GM12878 (cell line): ENCODE measurements at regions of chr9 and their contacts with region 1.

Region 1: DNA sequence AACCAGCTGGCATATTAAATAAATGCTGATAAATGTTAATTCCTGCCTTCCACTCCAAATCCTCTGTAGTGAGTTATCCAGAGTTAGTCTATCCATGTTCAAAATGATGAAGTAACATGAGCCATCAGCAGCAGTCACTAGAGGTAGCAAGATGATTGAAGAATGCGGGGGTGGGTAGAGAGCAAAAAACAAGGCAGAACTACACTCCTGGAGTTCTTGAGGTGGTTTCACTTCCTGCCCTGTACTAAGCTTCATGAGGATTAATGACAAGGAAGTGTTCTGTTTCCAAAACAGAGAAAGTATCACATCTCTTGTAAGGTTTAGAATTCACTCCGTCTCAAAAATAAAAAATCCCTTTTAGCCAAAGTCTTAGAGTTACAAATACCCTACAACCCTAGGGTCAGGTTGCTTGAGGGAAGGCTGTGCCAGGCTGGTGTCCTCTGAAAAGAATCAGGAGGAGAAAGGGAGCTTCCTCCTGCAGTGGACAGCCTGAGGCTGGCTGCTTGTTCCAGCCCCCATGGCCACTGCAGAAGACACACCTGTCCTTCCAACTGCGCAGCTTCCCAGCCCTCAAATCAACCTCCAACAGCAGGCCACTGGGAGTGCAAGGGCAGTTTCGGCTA is 180.2 kb downstream of the DENND1A start:
- DNase-seq: peak; percentile 40
- ATAC-seq: peak; percentile 90
- H3K4me3 ChIP-seq: no peak overlapping the region
- H3K27ac ChIP-seq: peak overlapping the region; percentile 60
- H3K4me1 ChIP-seq: peaks cover 21% of the 10 kb centered on the region
- H3K27me3 ChIP-seq: no peaks in the 10 kb centered on the region
- CTCF ChIP-seq: peak in 1 of 3 experiments; percentile 26; a peak in 2 of 6 replicates
- EP300 ChIP-seq: 0 out of 4 replicates have a peak, but pooled peaks of 1 of the 2 experiments have one; percentile 29
- POLR2A ChIP-seq: no peak
- RAD21 ChIP-seq: peak; percentile 52

Region 2: DNA sequence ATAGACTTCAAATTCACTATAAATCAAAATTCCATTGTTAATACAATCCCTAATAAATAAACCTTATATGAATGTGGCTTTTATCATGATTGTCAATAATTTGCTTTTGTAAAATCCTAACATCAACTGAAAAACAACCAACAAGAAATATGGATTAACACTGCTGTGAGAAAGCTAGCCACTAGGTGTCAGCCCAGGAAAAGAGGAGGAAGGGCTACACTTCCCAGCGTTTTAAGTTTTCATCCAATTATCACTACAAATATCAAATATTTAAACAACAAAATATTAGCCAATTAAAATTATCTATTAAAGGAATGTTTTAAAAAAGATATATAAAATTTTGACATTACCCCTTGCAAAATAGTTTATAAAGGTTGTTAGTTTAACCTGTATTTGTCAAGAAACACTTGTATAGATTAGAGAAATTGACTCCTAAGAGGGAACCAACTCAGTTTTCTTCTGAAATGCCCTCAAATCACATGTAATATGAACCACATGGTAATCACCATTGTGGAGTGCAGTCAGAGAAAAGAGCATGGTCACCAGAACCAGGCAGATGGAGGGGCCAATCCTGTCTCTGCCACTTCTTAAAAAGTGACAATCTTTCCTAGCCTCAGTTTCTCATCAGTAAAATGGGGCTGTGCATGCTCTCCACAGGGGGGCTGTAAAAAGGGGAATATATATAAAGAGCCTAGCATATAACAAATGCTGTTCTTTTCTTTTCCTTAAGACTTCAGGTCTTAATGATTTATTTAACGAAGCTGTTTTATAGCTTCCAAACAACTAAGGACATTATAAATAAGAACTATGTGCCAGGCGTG is 205.5 kb before region 1 on chr9:
- CTCF ChIA-PET with region 1: interaction called, 3 read pairs
- POLR2A ChIA-PET with region 1: no interaction called
- RAD21 ChIA-PET with region 1: no interaction called
- SMC1A ChIA-PET with region 1: interaction called, 4 read pairs
- in situ Hi-C with region 1: no loop called
- intact Hi-C with region 1: loop called (anchors 10 kb)
- DNase-seq: no peak
- ATAC-seq: peak; percentile 65
- H3K4me3 ChIP-seq: no peak overlapping the region
- H3K27ac ChIP-seq: no peak overlapping the region
- H3K4me1 ChIP-seq: no peaks in the 10 kb centered on the region
- H3K27me3 ChIP-seq: no peaks in the 10 kb centered on the region
- CTCF ChIP-seq: peak; percentile 68 to 89 (median 81)
- EP300 ChIP-seq: no peak
- POLR2A ChIP-seq: no peak
- RAD21 ChIP-seq: peak; percentile 98

Region 3: DNA sequence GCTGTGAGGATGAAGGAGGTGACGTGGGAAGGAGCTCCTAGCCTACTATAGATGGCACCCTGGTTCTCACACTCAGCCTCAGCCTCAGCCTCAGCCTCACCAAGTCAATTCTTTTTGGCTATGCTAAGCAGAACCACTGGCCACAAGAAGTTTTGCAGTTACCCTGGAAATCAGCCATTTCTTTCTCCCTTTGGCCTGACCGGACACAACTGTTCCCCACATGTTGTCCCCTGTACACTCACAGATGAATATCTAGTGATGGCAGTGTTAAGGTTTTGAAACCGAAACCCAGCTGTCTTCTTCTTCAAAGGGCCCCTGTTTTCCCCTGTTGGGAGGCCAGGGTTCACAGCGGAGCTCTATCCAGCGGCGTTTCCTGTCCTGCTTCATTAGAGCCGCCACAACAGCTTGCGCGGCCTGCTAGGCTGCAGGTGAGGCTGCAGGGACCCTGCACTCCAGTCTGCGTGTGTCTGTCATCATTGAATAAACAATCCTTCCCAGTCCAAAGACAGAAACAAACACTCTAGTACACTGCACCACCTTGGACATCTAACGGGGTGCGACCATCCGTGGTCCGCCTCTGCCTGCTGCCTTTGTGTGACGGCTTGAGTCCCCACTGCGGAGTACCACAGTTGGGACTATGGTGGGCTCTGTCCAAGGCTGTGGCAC is 70.2 kb before region 1 on chr9:
- CTCF ChIA-PET with region 1: interaction called, 3 read pairs
- POLR2A ChIA-PET with region 1: no interaction called
- RAD21 ChIA-PET with region 1: interaction called, 13 read pairs
- SMC1A ChIA-PET with region 1: interaction called, 6 read pairs
- in situ Hi-C with region 1: no loop called
- intact Hi-C with region 1: no loop called
- DNase-seq: peak; percentile 95
- ATAC-seq: peak; percentile 97
- H3K4me3 ChIP-seq: no peak overlapping the region
- H3K27ac ChIP-seq: peak overlapping the region; percentile 72
- H3K4me1 ChIP-seq: peaks cover 31% of the 10 kb centered on the region
- H3K27me3 ChIP-seq: no peaks in the 10 kb centered on the region
- CTCF ChIP-seq: no peak
- EP300 ChIP-seq: peak in 1 of 2 experiments; percentile 82; a peak in 3 of 4 replicates
- POLR2A ChIP-seq: peak; percentile 60; the same call in 1 of the 2 replicates
- RAD21 ChIP-seq: peak; percentile 21; the same call in 1 of the 2 replicates

Region 4: DNA sequence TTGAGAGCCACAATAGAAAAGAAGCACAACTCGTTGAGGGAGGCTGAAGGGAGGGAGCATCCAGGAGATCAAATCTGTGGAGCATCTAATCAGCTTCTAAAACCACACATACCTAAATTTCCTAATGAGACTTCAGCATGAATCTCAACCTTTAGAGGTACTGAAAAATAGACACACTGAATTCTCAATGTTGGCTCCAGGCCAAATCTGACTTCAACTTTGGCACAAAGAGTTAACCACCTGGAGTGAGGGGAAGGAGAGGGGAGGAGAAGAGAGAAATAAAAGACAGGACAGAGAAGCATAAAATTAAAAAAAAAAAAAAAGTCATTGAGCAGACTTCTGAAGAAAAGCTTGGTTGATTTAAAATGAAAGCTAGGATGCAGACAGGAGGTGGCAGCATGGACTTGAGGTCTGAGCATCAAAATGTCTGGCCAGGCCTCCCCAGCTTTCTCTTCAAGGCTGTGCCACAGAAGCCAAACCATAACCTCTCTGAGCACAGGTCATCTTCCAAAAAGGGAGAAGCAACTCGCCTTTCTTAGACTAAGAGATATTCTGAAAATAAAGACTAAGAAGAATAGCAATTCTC is 25.4 kb before region 1 on chr9:
- CTCF ChIA-PET with region 1: interaction called, 6 read pairs
- POLR2A ChIA-PET with region 1: no interaction called
- RAD21 ChIA-PET with region 1: no interaction called
- SMC1A ChIA-PET with region 1: interaction called, 36 read pairs
- in situ Hi-C with region 1: no loop called
- intact Hi-C with region 1: no loop called
- DNase-seq: no peak
- ATAC-seq: no peak; the same call in 2 of the 3 replicates
- H3K4me3 ChIP-seq: no peak overlapping the region
- H3K27ac ChIP-seq: no peak overlapping the region
- H3K4me1 ChIP-seq: no peaks in the 10 kb centered on the region
- H3K27me3 ChIP-seq: no peaks in the 10 kb centered on the region
- CTCF ChIP-seq: peak in 1 of 3 experiments; percentile 20; a peak in 2 of 6 replicates
- EP300 ChIP-seq: no peak
- POLR2A ChIP-seq: no peak
- RAD21 ChIP-seq: peak; percentile 49; the same call in 1 of the 2 replicates

Region 5: GRCh38 chr9:123763910-123764588 is 14.4 kb after region 1 on chr9:
- CTCF ChIA-PET with region 1: interaction called, 6 read pairs
- POLR2A ChIA-PET with region 1: interaction called, 5 read pairs
- RAD21 ChIA-PET with region 1: interaction called, 9 read pairs
- SMC1A ChIA-PET with region 1: interaction called, 92 read pairs
- in situ Hi-C with region 1: no loop called
- intact Hi-C with region 1: no loop called
- DNase-seq: no peak
- ATAC-seq: no peak
- H3K4me3 ChIP-seq: no peak overlapping the region
- H3K27ac ChIP-seq: no peak overlapping the region
- H3K4me1 ChIP-seq: no peaks in the 10 kb centered on the region
- H3K27me3 ChIP-seq: no peaks in the 10 kb centered on the region
- CTCF ChIP-seq: no peak
- EP300 ChIP-seq: no peak
- POLR2A ChIP-seq: no peak
- RAD21 ChIP-seq: no peak

Region 6: GRCh38 chr9:123775289-123776284 is 25.9 kb after region 1 on chr9:
- CTCF ChIA-PET with region 1: interaction called, 16 read pairs
- POLR2A ChIA-PET with region 1: interaction called, 4 read pairs
- RAD21 ChIA-PET with region 1: interaction called, 7 read pairs
- SMC1A ChIA-PET with region 1: interaction called, 32 read pairs
- in situ Hi-C with region 1: no loop called
- intact Hi-C with region 1: no loop called
- DNase-seq: no peak
- ATAC-seq: peak; percentile 64
- H3K4me3 ChIP-seq: no peak overlapping the region
- H3K27ac ChIP-seq: no peak overlapping the region
- H3K4me1 ChIP-seq: peaks cover 3% of the 10 kb centered on the region
- H3K27me3 ChIP-seq: no peaks in the 10 kb centered on the region
- CTCF ChIP-seq: no peak
- EP300 ChIP-seq: no peak
- POLR2A ChIP-seq: no peak
- RAD21 ChIP-seq: no peak

Region 7: GRCh38 chr9:123871781-123872180 is 122.1 kb after region 1 on chr9:
- CTCF ChIA-PET with region 1: no interaction called
- POLR2A ChIA-PET with region 1: no interaction called
- RAD21 ChIA-PET with region 1: interaction called, 3 read pairs
- SMC1A ChIA-PET with region 1: interaction called, 11 read pairs
- in situ Hi-C with region 1: no loop called
- intact Hi-C with region 1: no loop called
- DNase-seq: no peak
- ATAC-seq: peak; percentile 16; the same call in 1 of the 3 replicates
- H3K4me3 ChIP-seq: no peak overlapping the region
- H3K27ac ChIP-seq: no peak overlapping the region
- H3K4me1 ChIP-seq: peaks cover 13% of the 10 kb centered on the region
- H3K27me3 ChIP-seq: no peaks in the 10 kb centered on the region
- CTCF ChIP-seq: no peak
- EP300 ChIP-seq: no peak
- POLR2A ChIP-seq: no peak
- RAD21 ChIP-seq: no peak

Region 8: DNA sequence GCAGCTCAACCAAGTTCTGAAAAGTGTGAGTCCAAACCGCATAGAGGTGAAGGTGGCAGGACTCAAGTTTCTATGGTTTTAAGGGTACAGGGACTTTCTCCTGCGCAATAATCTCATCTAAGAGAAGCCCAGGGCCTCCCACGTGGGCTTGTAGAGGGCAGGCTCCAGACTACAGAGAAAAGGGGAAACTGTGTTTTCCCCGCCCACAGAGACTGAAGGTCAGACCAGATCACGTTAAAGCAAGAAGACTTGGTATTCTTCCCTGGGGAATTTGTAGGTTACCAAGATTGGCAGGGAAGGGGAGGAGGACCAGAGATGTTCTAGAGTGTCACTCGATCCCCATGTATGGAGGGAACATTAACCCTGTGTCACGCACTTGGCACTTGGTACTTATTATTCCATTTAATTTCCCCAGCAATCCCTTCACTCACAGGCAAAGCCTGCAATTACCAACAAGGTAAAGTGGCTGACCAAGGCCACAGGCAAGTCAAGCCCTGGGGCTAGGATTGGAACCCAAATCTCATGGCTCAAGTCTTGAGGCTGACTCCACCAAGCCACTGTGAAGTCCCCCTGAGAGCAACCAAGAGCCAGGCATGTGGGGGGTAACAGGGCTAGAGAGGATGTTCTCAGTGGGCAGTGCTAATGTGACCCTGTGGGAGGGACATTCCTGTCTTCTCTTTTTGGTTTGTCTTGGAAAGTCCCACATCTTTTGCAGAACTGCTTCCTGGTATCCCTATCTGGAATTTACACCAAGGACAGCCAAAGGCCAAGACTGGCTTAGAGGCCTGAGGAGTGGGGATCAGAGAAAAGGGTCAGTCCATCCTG is 489.8 kb after region 1 on chr9:
- CTCF ChIA-PET with region 1: no interaction called
- POLR2A ChIA-PET with region 1: no interaction called
- RAD21 ChIA-PET with region 1: no interaction called
- SMC1A ChIA-PET with region 1: no interaction called
- in situ Hi-C with region 1: no loop called
- intact Hi-C with region 1: no loop called
- DNase-seq: peak; percentile 72
- ATAC-seq: peak; percentile 95
- H3K4me3 ChIP-seq: no peak overlapping the region
- H3K27ac ChIP-seq: peak overlapping the region; percentile 89
- H3K4me1 ChIP-seq: peaks cover 39% of the 10 kb centered on the region
- H3K27me3 ChIP-seq: no peaks in the 10 kb centered on the region
- CTCF ChIP-seq: no peak
- EP300 ChIP-seq: peak; percentile 37 to 52; a peak in 2 of 4 replicates
- POLR2A ChIP-seq: no peak
- RAD21 ChIP-seq: no peak